HEK293 (cell line): ENCODE measurements at regions of chr12 and their contacts with region 1.

Region 1: GRCh38 chr12:31406345-31406744 is 80.4 kb upstream of the SINHCAF start:
- H3K4me3 ChIP-seq: no peak overlapping the region
- H3K27ac ChIP-seq: no peak overlapping the region
- H3K4me1 ChIP-seq: no peaks in the 10 kb centered on the region
- CTCF ChIP-seq: no peak

Region 2: DNA sequence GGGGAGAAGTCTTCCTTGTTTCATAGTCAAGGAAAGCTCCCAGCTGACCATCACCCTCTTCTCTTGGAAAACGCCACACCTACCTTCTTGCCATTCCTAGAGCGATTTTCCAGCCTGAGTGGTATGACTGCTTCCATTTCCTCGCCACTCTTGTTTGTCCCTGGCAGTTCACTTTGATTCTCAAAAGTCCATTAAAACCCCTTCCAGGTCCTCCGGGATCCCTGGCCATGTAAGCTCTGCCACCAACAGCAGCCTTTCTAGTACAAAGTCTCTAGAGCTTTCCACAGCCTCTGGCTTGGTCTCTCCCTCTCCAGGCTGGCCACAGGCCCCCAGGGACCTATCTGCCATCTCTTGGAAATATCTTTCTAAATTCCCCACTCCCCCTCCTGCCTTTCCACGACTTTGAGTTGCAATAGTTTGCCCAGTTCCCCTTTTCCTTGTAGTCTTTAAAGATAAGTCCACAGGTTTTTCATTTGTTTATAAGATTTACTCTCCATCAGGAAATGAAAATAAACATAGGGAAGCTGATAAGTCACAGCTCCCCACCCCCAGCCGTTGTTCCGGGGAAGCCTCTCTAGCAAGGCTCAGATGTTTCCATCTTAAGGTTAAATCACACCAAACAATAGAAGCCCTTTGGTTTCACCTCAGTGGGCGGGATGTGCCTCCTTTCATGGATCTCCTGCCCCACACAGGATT is 37.5 kb before region 1 on chr12:
- CTCF ChIA-PET with region 1: interaction called, 13 read pairs
- POLR2A ChIA-PET with region 1: no interaction called
- H3K4me3 ChIP-seq: no peak overlapping the region
- H3K27ac ChIP-seq: peak overlapping the region; percentile 89
- H3K4me1 ChIP-seq: peaks cover 21% of the 10 kb centered on the region
- CTCF ChIP-seq: no peak

Region 3: DNA sequence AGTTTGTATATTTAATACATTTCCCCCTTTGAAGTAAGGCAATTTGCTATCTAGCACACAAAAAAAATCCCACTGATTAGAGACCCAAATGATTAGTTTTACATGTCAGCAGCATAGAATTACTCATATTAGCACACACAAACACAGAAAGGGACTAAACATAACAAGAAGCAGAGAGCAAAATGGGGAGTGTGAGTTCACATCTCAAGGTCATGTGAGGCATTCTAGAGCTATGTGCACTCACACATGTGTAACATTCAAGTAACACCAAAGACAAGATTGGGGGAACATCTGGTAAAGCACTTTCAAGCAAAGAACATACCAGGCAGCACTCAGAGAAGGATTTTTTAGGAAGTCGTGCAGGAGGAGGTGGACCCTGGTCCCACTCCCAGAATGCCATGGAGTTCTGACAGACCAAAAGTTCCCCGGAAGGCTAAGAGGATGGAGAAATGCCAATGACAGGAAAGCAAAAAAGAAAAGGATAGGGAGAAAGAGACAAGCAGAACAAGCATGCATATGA is 25.4 kb after region 1 on chr12:
- CTCF ChIA-PET with region 1: interaction called, 12 read pairs
- POLR2A ChIA-PET with region 1: no interaction called
- H3K4me3 ChIP-seq: no peak overlapping the region
- H3K27ac ChIP-seq: no peak overlapping the region
- H3K4me1 ChIP-seq: no peaks in the 10 kb centered on the region
- CTCF ChIP-seq: no peak

Region 4: GRCh38 chr12:31589904-31590641 is 183.7 kb after region 1 on chr12:
- CTCF ChIA-PET with region 1: interaction called, 18 read pairs
- POLR2A ChIA-PET with region 1: no interaction called
- H3K4me3 ChIP-seq: peak overlapping the region; percentile 84
- H3K27ac ChIP-seq: peak overlapping the region; percentile 94
- H3K4me1 ChIP-seq: peaks cover 19% of the 10 kb centered on the region
- CTCF ChIP-seq: peak; percentile 16; the same call in 1 of the 2 replicates

Region 5: GRCh38 chr12:31644536-31644935 is 238.2 kb after region 1 on chr12:
- CTCF ChIA-PET with region 1: interaction called, 19 read pairs
- POLR2A ChIA-PET with region 1: no interaction called
- H3K4me3 ChIP-seq: no peak overlapping the region
- H3K27ac ChIP-seq: no peak overlapping the region
- H3K4me1 ChIP-seq: no peaks in the 10 kb centered on the region
- CTCF ChIP-seq: no peak